ENCODE measurements at regions of chr2 and their contacts with region 1.

Region 1: DNA sequence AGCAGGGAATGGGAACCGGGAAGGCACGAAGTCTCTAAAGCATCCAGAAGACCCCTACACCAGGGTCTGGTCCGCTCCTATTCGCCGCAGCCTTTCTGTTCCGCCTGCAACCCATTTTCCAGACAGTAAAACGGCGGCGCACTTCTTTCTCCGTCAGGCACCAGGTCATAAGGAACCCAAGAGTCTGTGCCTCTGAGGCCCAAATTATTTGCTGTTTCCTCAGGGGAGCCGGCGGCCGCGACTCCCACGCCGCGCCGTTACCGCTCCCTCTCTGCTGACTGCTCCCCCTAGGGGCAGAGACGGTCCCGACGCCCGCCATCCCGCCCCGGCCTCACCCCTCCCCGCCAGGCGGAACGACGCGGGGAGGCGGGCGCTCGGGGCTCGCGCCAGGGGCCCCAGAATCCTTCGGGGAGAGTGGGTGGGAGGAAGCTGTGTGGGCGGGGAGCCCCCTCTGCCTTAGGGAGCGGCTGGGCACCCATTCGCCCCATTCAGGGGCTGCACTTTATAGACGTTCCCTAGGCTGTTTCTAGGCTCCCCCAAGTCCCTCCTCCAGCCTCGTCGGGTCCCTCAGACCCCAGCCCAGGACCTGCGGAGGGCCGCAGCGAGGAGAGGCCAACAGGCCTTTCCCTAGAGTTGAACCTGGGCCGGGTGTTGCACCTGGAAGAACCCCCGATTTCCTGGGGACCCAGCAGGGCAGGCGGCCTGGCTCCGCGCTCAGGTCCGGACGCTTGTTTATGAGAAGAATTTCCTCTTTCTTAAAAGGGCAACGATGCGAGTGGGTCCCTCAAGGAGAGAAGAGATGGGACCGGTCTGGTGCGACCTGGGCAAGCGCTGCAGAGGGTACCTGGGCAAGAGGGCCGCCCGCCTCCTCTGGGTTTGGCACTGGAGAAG is 3.6 kb upstream of the CTDSP1 start:
- DNase-seq: peak; percentile 93
- H3K4me3 Mint-ChIP-seq: peak overlapping the region; percentile 86
- H3K27ac Mint-ChIP-seq: peak overlapping the region; percentile 93
- H3K4me1 Mint-ChIP-seq: peaks cover 30% of the 10 kb centered on the region
- H3K27me3 Mint-ChIP-seq: no peaks in the 10 kb centered on the region

Region 2: DNA sequence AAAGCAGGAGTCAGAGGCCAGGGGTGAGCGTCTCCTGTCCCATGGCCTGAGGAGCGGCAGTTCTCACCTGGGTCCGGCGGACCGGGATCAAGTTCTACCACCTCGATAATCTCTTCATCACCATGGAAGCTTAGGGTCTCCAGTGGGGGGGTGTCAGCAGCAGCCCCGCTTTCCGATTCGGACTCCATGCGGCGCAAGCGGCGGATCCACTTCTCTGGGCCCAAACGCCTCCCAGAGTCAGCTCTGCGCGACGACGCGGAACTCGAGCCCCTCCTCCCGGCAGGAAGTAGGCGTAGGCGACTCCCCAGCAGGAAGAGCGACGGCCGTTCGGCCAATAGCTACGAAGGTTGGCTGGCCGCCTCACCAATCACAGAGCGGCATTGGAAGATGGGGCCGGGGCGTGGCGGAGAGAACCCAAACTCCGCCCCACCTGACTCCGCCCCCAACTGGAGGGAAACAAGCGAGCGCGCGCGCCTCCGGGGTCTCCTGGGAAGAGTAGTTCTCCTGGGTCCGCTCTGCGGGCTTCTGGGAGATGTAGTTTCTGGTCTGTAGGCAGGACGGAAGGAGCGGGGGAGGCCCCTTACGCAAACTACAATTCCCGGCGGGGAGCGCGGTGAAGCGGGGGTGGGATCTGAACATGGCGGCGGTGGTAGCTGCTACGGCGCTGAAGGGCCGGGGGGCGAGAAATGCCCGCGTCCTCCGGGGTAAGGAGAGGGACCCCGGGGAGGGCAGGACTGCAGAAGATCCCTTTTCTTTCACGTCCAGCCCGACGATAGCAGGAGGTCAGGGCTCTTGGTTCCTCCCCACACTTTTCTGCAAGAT is 125.9 kb before region 1 on chr2 and contains the starts of genes AAMP and PNKD:
- intact Hi-C with region 1: loop called (anchors 1 kb)
- DNase-seq: peak; percentile 100
- H3K4me3 Mint-ChIP-seq: peak within 1 kb of the TSS; percentile 94
- H3K27ac Mint-ChIP-seq: peak within 1 kb of the TSS; percentile 93
- H3K4me1 Mint-ChIP-seq: peaks cover 20% of the 10 kb centered on the region
- H3K27me3 Mint-ChIP-seq: no peaks in the 10 kb centered on the region
- total RNA-seq, gene AAMP: 82.4 and 82.9 TPM in 2 replicates
- total RNA-seq, gene PNKD: 19.9 and 20.8 TPM in 2 replicates

Region 3: DNA sequence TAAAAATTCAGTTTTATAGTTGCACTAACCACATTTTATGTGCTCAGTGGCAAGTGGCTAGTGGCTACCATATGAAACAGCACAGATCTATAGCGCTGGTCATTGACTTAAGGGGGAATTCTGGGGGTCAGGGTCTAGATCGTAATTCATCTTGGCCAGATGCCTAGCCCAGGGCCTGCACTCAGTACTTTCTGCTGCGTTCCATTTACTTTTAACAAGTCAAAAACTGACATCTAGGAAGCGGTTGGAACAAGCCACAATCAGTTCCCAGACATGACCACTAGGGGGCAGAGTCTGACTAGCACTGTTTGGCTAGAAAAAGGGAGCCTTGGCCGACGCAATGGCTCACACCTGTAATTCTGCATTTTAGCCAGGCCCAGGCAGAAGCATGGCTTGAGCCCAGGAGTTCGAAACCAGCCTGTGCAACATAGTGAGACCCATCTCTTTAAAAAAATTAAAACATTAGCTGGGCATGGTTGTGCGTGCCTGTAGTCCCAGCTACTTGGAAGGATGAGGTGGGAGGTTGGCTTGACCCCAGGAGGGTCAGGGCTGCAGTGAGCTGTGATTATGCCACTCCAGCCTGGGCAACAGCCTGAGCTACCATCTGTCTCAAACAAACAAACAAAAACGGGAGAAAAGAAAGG is 94.7 kb before region 1 on chr2:
- intact Hi-C with region 1: loop called (anchors 1 kb)
- DNase-seq: peak; percentile 80
- H3K4me3 Mint-ChIP-seq: no peak overlapping the region
- H3K27ac Mint-ChIP-seq: peak overlapping the region; percentile 33
- H3K4me1 Mint-ChIP-seq: peaks cover 5% of the 10 kb centered on the region
- H3K27me3 Mint-ChIP-seq: no peaks in the 10 kb centered on the region

Region 4: GRCh38 chr2:218329027-218329825 is 66.8 kb before region 1 on chr2:
- intact Hi-C with region 1: no loop called
- DNase-seq: no peak
- H3K4me3 Mint-ChIP-seq: no peak overlapping the region
- H3K27ac Mint-ChIP-seq: no peak overlapping the region
- H3K4me1 Mint-ChIP-seq: peaks cover 1% of the 10 kb centered on the region
- H3K27me3 Mint-ChIP-seq: peaks cover 16% of the 10 kb centered on the region

Region 5: DNA sequence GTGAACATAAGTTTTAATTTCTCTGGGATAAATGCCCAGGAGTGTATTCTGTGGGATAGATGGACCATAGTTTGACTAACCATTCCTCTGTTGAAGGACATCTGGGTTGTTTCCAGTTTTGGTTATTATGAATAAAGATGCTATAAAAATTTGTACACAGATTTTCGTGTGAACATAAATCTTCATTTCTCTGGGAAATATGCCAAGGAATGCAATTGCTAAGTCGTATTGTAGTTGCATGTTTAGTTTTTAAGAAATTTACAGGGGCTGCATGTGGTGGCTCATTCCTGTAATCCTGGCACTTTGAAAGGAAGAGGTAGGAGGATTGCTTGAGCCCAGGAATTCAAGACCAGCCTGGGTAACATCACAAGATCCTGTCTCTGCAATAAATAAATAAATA is 20.8 kb before region 1 on chr2:
- intact Hi-C with region 1: no loop called
- DNase-seq: no peak
- H3K4me3 Mint-ChIP-seq: no peak overlapping the region
- H3K27ac Mint-ChIP-seq: no peak overlapping the region
- H3K4me1 Mint-ChIP-seq: no peaks in the 10 kb centered on the region
- H3K27me3 Mint-ChIP-seq: peaks cover 6% of the 10 kb centered on the region

Region 6: GRCh38 chr2:218406209-218406948 is 10.3 kb after region 1 on chr2:
- intact Hi-C with region 1: loop called (anchors 1 kb)
- DNase-seq: peak; percentile 91
- H3K4me3 Mint-ChIP-seq: peak overlapping the region; percentile 76
- H3K27ac Mint-ChIP-seq: peak overlapping the region; percentile 81
- H3K4me1 Mint-ChIP-seq: peaks cover 36% of the 10 kb centered on the region
- H3K27me3 Mint-ChIP-seq: no peaks in the 10 kb centered on the region

Region 7: DNA sequence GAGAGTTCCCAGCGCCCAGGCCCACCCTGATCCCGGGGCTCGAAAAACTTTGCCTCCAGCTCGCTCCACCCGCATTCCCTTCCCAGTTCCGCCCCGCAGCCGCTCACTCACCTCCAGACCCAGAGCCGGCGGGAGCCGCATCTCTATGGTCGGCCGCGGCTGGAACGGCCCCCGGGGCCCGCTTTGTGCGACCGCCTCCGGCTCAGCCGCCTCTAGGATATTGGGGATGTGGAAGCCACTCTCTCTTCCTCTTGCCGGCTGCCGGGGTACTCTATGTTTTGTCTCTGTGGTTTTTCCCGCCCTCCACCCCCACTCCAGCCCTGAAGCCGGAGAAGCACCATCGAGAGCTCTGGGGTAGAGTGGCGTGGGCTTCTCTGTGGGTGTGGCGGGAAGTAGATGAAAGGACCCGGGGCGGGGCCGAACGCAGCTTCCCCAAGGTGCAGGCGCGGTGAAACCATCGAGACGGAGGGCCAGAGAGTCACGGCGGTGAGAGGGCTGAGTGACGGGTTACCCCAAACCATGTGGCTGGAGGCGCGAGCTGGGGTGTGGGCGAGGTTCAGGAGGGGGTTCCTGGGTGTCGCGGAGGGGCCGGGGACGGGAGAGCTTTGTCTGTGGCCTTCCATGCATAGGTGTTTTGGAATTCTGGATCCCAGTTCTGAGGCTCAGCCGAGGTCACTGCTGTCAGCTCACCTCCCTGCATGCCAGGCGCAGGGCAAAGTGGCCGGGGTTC is 263.4 kb after region 1 on chr2 and contains the starts of genes BCS1L and ZNF142:
- intact Hi-C with region 1: loop called (anchors 1 kb)
- DNase-seq: peak; percentile 92
- H3K4me3 Mint-ChIP-seq: peak within 1 kb of the TSS; percentile 91
- H3K27ac Mint-ChIP-seq: peak within 1 kb of the TSS; percentile 82
- H3K4me1 Mint-ChIP-seq: peaks cover 25% of the 10 kb centered on the region
- H3K27me3 Mint-ChIP-seq: no peaks in the 10 kb centered on the region
- total RNA-seq, gene BCS1L: 77.3 and 83.1 TPM in 2 replicates
- total RNA-seq, gene ZNF142: 48.7 and 51.0 TPM in 2 replicates